Right cardiac atrium (tissue), 5 donors: ENCODE measurements at regions of chr16 and their contacts with region 1.

Region 1: DNA sequence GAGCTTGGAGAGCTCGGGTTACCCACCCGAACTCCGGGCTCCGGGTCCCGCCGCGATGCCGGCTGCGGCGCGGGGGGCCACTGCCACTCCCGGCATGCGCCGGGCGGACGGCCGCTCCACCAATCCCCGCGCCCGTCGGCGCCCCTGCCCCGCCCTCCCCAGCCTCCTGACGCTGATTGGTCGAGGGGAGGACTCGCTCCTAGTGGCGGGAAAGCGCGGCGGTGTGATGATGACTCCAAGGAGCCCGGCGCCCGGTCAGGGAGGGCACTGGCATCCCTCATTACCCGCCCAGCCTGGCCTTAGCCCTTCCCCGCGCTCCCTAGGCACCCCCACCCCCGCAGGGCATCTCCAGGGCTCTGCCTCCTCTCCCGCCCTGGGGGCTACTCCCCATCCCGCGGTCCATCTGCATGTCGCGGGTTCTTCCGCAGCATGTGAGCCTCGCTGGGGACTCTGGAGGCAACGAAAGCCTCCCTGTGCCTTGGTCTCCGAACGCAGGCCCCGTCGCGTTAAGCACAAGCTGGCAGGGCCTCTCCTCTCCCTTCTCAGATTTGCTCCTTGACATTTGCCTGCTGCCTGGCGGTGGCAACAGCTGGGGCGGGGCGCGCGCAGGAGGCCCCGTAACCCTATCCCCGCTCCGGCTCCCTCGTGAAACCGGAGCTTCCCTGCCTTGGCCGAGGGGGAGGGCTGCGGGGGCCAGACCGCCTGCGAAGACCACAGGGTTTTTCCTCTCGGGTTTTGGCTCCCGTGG is 1.7 kb downstream of the ATP2A1 start:
- DNase-seq: peak; percentile 89 to 96 (median 96)
- ATAC-seq: peak; percentile 94 to 95
- H3K4me3 ChIP-seq: peak overlapping the region; percentile 73
- H3K27ac ChIP-seq: no peak overlapping the region
- H3K4me1 ChIP-seq: peaks cover 3% of the 10 kb centered on the region
- H3K27me3 ChIP-seq: no peaks in the 10 kb centered on the region

Region 2: GRCh38 chr16:28924732-28925385 is 44.8 kb after region 1 on chr16 and contains the start of gene RABEP2:
- intact Hi-C with region 1: loop called in 1 of 4 experiments (anchors 5 kb)
- DNase-seq: peak; percentile 93 to 99 (median 97)
- ATAC-seq: peak; percentile 95 to 96
- H3K4me3 ChIP-seq: peak within 1 kb of the TSS; percentile 74
- H3K27ac ChIP-seq: peak within 1 kb of the TSS; percentile 97
- H3K4me1 ChIP-seq: no peaks in the 10 kb centered on the region
- H3K27me3 ChIP-seq: no peaks in the 10 kb centered on the region
- total RNA-seq, gene RABEP2: 13.4 to 24.3 (median 19.2) TPM

Region 3: DNA sequence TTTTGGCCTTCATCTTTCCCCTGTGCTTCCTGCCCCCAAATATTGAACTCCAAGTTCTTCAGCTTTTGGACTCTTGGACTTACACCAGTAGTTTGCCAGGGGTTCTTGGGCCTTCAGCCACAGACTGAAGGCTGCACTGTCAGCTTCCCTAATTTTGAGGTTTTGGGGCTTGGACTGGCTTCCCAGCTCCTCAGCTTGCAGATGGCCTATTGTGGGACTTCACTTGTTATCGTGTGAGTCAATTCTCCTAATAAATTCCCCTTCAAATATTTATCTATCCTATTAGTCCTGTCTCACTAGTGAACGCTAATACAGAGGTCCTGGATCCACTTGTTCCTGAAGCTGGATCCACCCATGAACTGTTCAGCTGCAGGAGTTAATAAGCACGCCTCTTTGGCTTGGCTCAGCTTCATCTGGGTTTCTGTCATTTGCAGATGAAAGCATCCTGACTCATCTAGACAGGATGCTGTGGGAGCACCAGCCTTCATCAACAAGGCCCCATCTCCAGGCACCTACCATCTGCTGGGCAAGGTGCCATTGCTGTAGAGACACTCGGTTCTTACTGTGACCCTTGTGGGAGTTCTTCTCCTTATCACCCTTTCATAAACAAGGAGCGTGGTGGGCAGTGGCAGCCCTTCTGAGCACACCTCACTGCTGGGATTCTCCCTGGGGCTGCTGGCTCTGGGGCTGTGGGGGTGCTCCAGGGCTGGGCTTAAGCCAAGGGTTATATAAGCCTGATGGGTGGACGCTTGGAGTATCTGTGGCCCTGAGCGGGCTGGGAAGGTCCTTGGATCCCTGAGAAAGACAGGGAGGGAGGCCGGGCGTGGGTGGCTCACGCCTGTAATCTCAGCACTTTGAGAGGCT is 127.9 kb after region 1 on chr16:
- intact Hi-C with region 1: no loop called
- DNase-seq: peak in 1 of 3 donors; percentile 17
- ATAC-seq: no peak
- H3K4me3 ChIP-seq: no peak overlapping the region
- H3K27ac ChIP-seq: no peak overlapping the region
- H3K4me1 ChIP-seq: no peaks in the 10 kb centered on the region
- H3K27me3 ChIP-seq: no peaks in the 10 kb centered on the region